Aorta (tissue), 5 donors: ENCODE measurements at regions of chr11 and their contacts with region 1.

Region 1: GRCh38 chr11:35363854-35364780 is 55.2 kb downstream of the SLC1A2 start:
- DNase-seq: peak; percentile 83 to 85
- ATAC-seq: peak; percentile 92
- H3K4me3 ChIP-seq: no peak overlapping the region
- H3K27ac ChIP-seq: peak overlapping the region; percentile 14 to 89
- H3K4me1 ChIP-seq: peaks cover 0 to 11% of the 10 kb centered on the region in 2 donors
- H3K27me3 ChIP-seq: no peaks in the 10 kb centered on the region

Region 2: GRCh38 chr11:35100013-35100383 is 264.1 kb before region 1 on chr11:
- intact Hi-C with region 1: loop called in 1 of 2 experiments (anchors 5 kb)
- DNase-seq: peak in 1 of 2 donors; percentile 75
- ATAC-seq: peak; percentile 91
- H3K4me3 ChIP-seq: no peak overlapping the region
- H3K27ac ChIP-seq: peak overlapping the region; percentile 12 to 93
- H3K4me1 ChIP-seq: peaks cover 9 to 10% of the 10 kb centered on the region in 2 donors
- H3K27me3 ChIP-seq: no peaks in the 10 kb centered on the region

Region 3: DNA sequence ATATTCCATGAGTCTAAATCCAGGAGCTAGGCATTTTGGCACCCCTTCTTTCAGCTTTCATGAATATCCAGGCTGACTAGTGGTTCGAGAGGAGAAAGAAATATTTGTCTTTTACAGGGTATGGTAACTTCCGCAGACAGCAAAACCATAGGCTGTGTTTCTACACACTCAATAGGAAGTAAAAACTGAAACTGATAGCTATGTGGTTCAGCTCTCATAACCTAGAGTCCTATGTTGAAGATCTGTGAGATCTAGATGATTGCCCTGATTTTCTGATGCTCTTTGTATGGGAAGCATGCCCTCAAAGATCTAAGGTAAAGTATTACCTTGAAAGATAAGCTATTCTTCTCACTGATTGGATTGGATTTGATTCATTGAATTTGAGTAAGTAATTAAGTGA is 106.8 kb before region 1 on chr11:
- intact Hi-C with region 1: loop called in 1 of 2 experiments (anchors 10 kb)
- DNase-seq: no peak
- ATAC-seq: no peak
- H3K4me3 ChIP-seq: no peak overlapping the region
- H3K27ac ChIP-seq: no peak overlapping the region
- H3K4me1 ChIP-seq: peaks cover 3 to 8% of the 10 kb centered on the region in 2 donors
- H3K27me3 ChIP-seq: no peaks in the 10 kb centered on the region

Region 4: GRCh38 chr11:35288817-35289541 is 75.1 kb before region 1 on chr11:
- intact Hi-C with region 1: loop called in 1 of 2 experiments (anchors 10 kb)
- DNase-seq: no peak
- ATAC-seq: peak; percentile 41
- H3K4me3 ChIP-seq: no peak overlapping the region
- H3K27ac ChIP-seq: peak overlapping the region; percentile 2 to 89
- H3K4me1 ChIP-seq: peaks cover 0 to 2% of the 10 kb centered on the region in 2 donors
- H3K27me3 ChIP-seq: no peaks in the 10 kb centered on the region

Region 5: GRCh38 chr11:35318977-35319925 is 44.9 kb before region 1 on chr11:
- intact Hi-C with region 1: loop called in 1 of 2 experiments (anchors 5 kb)
- DNase-seq: no peak
- ATAC-seq: no peak
- H3K4me3 ChIP-seq: no peak overlapping the region
- H3K27ac ChIP-seq: no peak overlapping the region
- H3K4me1 ChIP-seq: peaks cover 0 to 2% of the 10 kb centered on the region in 2 donors
- H3K27me3 ChIP-seq: no peaks in the 10 kb centered on the region